Dorsolateral prefrontal cortex (tissue), 120 donors: ENCODE measurements at regions of chr16 and their contacts with region 1.

Region 1: DNA sequence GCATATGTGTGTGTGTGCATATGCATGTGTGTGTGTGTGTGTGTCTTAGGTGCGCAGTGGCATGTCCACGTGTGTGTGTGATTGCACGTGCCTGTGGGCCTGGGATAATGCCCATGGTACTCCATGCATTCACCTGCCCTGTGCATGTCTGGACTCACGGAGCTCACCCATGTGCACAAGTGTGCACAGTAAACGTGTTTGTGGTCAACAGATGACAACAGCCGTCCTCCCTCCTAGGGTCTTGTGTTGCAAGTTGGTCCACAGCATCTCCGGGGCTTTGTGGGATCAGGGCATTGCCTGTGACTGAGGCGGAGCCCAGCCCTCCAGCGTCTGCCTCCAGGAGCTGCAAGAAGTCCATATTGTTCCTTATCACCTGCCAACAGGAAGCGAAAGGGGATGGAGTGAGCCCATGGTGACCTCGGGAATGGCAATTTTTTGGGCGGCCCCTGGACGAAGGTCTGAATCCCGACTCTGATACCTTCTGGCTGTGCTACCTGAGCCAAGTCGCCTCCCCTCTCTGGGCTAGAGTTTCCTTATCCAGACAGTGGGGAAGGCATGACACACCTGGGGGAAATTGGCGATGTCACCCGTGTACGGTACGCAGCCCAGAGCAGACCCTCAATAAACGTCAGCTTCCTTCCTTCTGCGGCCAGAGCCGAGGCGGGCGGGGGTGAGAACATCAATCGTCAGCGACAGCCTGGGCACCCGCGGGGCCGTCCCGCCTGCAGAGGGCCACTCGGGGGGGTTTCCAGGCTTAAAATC is 47.6 kb downstream of the IL21R start:
- DNase-seq: no peak
- H3K4me3 ChIP-seq: no peak overlapping the region
- H3K27ac ChIP-seq: no peak overlapping the region
- H3K27me3 ChIP-seq: peaks cover 0 to 12% (median 0%) of the 10 kb centered on the region in 45 donors
- CTCF ChIP-seq: no peak

Region 2: GRCh38 chr16:25838724-25839186 is 1610.9 kb before region 1 on chr16:
- intact Hi-C with region 1: loop called (anchors 10 kb)
- DNase-seq: peak in 2 of 10 donors; percentile 6 to 36
- H3K4me3 ChIP-seq: peak overlapping the region in 19 of 59 donors; percentile 3 to 49 (median 25)
- H3K27ac ChIP-seq: no peak overlapping the region
- H3K27me3 ChIP-seq: no peaks in the 10 kb centered on the region
- CTCF ChIP-seq: peak; percentile 70 to 90 (median 82)

Region 3: GRCh38 chr16:27154705-27155521 is 294.7 kb before region 1 on chr16:
- intact Hi-C with region 1: loop called in 1 of 2 experiments (anchors 10 kb)
- DNase-seq: peak in 8 of 10 donors; percentile 20 to 62 (median 46)
- H3K4me3 ChIP-seq: no peak overlapping the region
- H3K27ac ChIP-seq: no peak overlapping the region
- H3K27me3 ChIP-seq: no peaks in the 10 kb centered on the region
- CTCF ChIP-seq: peak; percentile 74 to 95 (median 89)

Region 4: DNA sequence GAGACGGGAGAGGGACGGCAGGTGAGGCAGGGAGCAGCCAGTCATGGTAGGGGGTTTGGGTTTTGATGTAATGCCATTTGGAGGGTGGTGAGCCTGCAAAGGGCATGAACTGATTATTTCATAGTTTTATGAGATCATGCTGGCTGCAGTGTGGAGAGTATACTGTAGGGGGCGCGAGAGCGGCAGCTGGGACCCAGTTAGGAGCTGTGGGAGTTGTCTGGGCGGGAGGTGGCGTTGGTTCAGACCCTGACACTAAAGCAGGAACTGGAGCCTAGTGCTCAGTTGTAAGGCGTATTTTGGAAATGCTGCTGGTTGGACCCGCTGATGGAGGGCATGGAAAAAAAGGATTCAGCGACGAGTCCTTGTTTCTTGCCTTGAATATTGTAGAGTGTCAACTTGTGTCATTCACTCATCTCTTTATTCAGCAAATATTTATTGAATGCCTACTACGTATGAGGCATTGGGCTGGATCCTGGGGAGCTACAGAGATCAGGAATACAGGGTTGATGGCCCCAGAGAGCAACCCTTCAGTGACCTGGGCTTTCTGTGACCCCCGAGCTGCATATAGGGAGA is 270.0 kb before region 1 on chr16:
- intact Hi-C with region 1: loop called (anchors 5 to 10 kb)
- DNase-seq: peak in 9 of 10 donors; percentile 9 to 67 (median 55)
- H3K4me3 ChIP-seq: no peak overlapping the region
- H3K27ac ChIP-seq: no peak overlapping the region
- H3K27me3 ChIP-seq: peaks cover 0 to 12% (median 0%) of the 10 kb centered on the region in 45 donors
- CTCF ChIP-seq: peak; percentile 45 to 86 (median 76)

Region 5: DNA sequence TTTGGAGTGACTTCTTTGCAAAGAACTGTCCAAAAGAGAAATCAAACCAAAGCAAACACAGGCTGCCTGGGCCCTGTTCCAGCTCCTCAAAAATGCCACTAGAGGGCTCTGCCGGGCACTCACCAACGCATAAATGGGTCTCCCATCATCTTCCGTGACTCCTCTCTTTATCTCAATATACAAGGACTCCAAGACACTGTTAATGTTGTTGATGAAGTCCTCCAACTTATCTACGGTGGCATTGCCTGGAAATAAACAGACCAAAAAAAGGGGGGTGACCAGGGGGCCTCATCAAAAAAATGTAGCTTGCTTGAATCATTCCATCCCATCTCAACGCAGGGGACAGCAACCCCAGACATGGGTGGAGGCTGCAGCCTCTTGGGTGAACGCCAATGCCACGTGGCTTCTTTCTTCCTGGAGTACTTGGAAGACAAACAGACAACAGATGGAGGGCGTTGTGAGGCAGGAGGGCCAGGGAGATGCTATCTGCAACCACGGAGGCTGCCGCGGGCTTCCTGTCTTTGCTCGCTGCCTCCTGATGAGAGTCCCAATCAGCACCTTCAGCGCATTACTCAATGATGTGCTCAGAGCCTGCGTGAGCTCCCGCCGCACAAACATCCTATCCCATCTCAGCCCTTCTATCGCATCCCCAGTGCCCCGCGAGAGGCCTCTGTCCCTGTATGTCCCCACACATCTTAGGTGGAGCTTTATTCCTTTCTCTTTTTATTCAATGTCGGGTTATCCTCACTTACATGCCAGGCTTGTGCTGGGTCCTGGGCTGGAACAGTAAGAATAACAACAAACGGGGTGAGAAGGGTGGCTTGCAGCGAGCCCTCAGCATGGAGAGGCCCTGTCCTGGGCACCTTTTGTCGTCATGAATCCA is 214.3 kb before region 1 on chr16:
- intact Hi-C with region 1: loop called (anchors 10 kb)
- DNase-seq: peak; percentile 57 to 91 (median 74)
- H3K4me3 ChIP-seq: peak overlapping the region in 54 of 59 donors; percentile 4 to 61 (median 32)
- H3K27ac ChIP-seq: peak overlapping the region in 53 of 59 donors; percentile 9 to 80 (median 68)
- H3K27me3 ChIP-seq: no peaks in the 10 kb centered on the region
- CTCF ChIP-seq: peak; percentile 61 to 90 (median 80)